GM12878 (cell line): ENCODE measurements at regions of chrX and their contacts with region 1.

Region 1: DNA sequence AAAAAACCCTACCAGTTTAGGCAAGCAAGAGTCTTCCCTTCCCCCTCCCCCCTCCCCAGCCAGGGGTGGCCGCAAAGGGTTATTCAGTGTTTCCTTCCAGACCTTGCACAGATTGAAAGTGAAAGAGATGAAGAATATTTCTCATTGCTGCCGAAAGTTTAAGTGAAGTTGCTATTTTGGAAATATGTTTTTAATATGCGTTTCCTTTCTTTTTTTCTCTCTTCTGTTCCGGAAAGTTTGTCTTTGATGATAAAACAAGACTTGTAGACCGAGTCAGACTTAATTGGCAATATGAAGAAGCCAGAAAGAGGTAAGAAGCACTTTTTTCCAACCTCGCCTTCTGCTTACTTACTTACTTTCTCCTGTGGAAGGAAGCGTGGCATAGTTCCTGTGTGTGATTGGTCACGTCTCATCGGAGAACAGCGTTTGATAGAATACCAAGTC is 58.5 kb upstream of the CLCN4 start:
- DNase-seq: peak; percentile 51
- ATAC-seq: peak; percentile 87
- H3K4me3 ChIP-seq: peak overlapping the region; percentile 50
- H3K27ac ChIP-seq: peak overlapping the region; percentile 77
- H3K4me1 ChIP-seq: peaks cover 11% of the 10 kb centered on the region
- H3K27me3 ChIP-seq: no peaks in the 10 kb centered on the region; a peak in 1 of 4 replicates
- CTCF ChIP-seq: no peak
- EP300 ChIP-seq: peak in 1 of 2 experiments; percentile 63; a peak in 1 of 4 replicates
- POLR2A ChIP-seq: no peak
- RAD21 ChIP-seq: 0 out of 2 replicates have a peak, but pooled peaks have one; percentile 19

Region 2: GRCh38 chrX:10001496-10001895 is 96.8 kb before region 1 on chrX:
- CTCF ChIA-PET with region 1: interaction called, 19 read pairs
- POLR2A ChIA-PET with region 1: interaction called, 13 read pairs
- RAD21 ChIA-PET with region 1: interaction called, 59 read pairs
- SMC1A ChIA-PET with region 1: interaction called, 21 read pairs
- in situ Hi-C with region 1: no loop called
- intact Hi-C with region 1: no loop called
- DNase-seq: no peak
- ATAC-seq: no peak
- H3K4me3 ChIP-seq: no peak overlapping the region
- H3K27ac ChIP-seq: no peak overlapping the region
- H3K4me1 ChIP-seq: peaks cover 9% of the 10 kb centered on the region
- H3K27me3 ChIP-seq: no peaks in the 10 kb centered on the region
- CTCF ChIP-seq: no peak
- EP300 ChIP-seq: no peak
- POLR2A ChIP-seq: no peak
- RAD21 ChIP-seq: no peak

Region 3: DNA sequence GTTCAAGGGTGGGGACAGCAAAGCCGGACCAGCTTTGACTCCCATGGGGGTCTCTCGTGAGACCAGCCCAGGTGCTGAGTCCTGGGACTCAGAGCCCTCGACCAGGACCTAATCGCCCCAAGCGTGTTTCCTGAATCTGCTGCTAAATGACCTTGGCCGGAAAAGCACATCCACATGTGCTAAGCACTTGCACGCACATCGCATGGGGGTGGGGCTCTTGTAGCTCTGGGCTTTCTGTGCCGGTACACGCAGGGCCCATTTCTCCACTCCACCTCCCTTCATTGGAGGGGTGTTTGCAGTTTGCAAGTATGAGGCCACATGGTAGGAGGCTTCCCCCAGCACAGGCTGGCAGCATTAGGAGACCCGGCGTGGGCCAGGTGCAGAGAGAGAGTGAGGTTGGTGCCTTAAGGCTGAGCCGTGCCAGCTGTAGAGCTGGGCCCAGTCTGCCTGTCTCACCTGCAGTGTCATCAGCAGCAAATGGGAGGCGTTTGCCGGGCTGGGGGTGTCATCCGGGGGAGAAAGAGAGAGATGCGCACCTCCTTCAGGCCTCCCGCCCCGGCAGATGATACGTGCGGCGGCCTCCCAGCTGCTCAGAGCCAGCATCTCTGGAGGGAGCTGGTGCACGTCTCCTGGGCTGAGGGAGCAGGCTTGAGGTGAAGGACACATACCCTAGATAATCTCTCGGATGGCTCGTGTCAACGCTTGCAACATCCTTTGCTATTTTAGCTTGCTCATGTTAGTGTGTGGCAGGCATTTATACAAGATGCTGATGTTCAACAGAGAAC is 13.3 kb after region 1 on chrX:
- CTCF ChIA-PET with region 1: interaction called, 55 read pairs
- POLR2A ChIA-PET with region 1: interaction called, 28 read pairs
- RAD21 ChIA-PET with region 1: interaction called, 99 read pairs
- SMC1A ChIA-PET with region 1: interaction called, 110 read pairs
- in situ Hi-C with region 1: no loop called
- intact Hi-C with region 1: loop called (anchors 1 kb)
- DNase-seq: peak; percentile 59
- ATAC-seq: peak; percentile 69
- H3K4me3 ChIP-seq: peak overlapping the region; percentile 18; the same call in 1 of the 2 replicates
- H3K27ac ChIP-seq: peak overlapping the region; percentile 87
- H3K4me1 ChIP-seq: peaks cover 47% of the 10 kb centered on the region
- H3K27me3 ChIP-seq: no peaks in the 10 kb centered on the region; a peak in 1 of 4 replicates
- CTCF ChIP-seq: no peak
- EP300 ChIP-seq: peak; percentile 46 to 63; a peak in 3 of 4 replicates
- POLR2A ChIP-seq: peak; percentile 60
- RAD21 ChIP-seq: no peak